K562 (cell line): ENCODE measurements at regions of chr16 and their contacts with region 1.

Region 1: DNA sequence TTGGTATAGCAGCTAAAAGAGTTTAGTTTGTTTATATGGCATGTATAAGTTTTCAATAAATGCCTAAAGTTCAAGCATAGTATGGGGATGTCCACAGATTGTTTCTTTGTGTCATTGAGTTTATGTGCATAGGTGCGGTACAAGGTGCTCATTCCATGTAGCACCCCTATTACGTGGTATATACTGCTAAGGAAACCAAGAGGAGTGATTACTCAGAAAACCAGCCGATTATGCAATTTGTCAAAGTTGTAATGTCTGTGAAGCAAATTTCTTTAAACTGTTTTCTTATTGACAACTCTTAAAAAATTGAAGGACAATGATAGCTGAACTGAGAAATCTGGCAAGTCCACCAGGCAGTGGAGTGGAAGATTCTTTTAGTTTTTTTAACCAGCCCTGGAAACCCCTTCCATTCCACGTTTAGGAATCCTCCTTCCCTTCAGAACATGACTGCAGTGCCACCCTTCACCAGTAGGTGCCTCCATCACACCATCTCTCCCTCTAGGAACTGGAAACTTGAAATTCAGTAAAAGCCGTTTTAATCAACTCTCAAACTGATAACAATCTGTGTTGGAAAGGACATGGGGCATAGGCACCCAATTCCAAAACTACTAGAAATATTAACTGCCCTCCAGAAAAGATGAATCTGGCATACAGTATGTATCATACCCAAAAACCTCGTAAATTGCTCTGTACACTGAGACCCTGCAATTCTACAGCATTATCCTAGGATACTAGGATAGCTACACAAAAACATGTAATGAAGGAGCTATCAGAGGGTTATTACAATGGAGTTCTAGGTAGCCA is 43.5 kb downstream of the REXO5 start:
- DNase-seq: peak; percentile 46 to 74 (median 48)
- ATAC-seq: peak; percentile 79
- H3K4me3 ChIP-seq: no peak overlapping the region
- H3K27ac ChIP-seq: no peak overlapping the region
- H3K4me1 ChIP-seq: no peaks in the 10 kb centered on the region; a peak in 1 of 5 replicates
- H3K27me3 ChIP-seq: no peaks in the 10 kb centered on the region
- CTCF ChIP-seq: peak; percentile 87 to 95 (median 92)
- EP300 ChIP-seq: no peak
- POLR2A ChIP-seq: no peak
- RAD21 ChIP-seq: peak; percentile 98

Region 2: GRCh38 chr16:20660325-20660724 is 189.5 kb before region 1 on chr16:
- CTCF ChIA-PET with region 1: no interaction called
- POLR2A ChIA-PET with region 1: no interaction called
- in situ Hi-C with region 1: no loop called
- intact Hi-C with region 1: no loop called
- DNase-seq: no peak
- ATAC-seq: no peak
- H3K4me3 ChIP-seq: no peak overlapping the region
- H3K27ac ChIP-seq: no peak overlapping the region
- H3K4me1 ChIP-seq: no peaks in the 10 kb centered on the region
- H3K27me3 ChIP-seq: no peaks in the 10 kb centered on the region
- CTCF ChIP-seq: no peak
- EP300 ChIP-seq: no peak
- POLR2A ChIP-seq: no peak
- RAD21 ChIP-seq: no peak

Region 3: DNA sequence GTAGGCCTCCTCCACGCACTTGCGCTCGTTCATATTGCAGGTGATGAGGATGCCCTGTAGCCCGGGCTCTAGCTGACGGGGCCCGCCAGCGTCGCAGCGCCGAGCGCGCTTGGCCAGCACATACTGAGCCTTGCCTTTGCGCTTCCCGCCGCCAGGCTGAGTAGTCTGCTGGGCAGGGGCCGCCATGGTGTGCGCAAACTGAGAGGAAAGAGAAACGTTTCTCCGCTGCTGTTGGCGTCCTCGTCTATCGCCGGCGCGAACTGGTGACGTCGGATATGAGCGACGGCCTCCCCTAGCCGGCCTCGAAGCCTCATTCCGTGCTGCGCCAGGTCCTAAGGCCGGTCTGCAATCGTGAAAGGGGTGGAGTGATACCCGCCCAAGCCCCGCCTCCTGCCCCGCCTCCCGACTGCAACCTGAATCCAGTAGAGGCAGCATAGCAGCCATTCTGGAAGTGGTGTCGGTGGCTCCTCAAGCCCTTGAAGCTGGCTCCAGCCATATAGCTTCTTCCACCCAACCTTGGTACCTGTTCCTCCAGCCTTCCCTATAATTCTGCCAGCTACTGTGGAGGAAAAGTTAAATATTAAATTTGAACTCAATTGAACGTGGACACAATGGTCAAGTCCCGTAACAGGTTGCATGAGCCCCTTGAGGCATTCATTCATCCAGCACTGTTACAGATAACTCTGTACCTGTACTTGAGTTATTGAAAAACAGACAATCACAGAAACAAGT is 108.1 kb before region 1 on chr16 and contains the start of gene THUMPD1:
- CTCF ChIA-PET with region 1: no interaction called
- POLR2A ChIA-PET with region 1: no interaction called
- in situ Hi-C with region 1: no loop called
- intact Hi-C with region 1: no loop called
- DNase-seq: peak; percentile 93 to 97 (median 95)
- ATAC-seq: peak; percentile 93
- H3K4me3 ChIP-seq: peak within 1 kb of the TSS; percentile 96
- H3K27ac ChIP-seq: peak within 1 kb of the TSS; percentile 93
- H3K4me1 ChIP-seq: peaks cover 38 to 55% of the 10 kb centered on the region in 2 experiments
- H3K27me3 ChIP-seq: no peaks in the 10 kb centered on the region
- CTCF ChIP-seq: peak; percentile 30 to 43 (median 40); a peak in 3 of 6 replicates
- EP300 ChIP-seq: peak; percentile 35; the same call in 1 of the 2 replicates
- POLR2A ChIP-seq: peak; percentile 90
- RAD21 ChIP-seq: peak in 1 of 2 experiments; percentile 18; a peak in 2 of 4 replicates
- polyA plus RNA-seq, gene THUMPD1: 37.8 to 41.0 TPM

Region 4: DNA sequence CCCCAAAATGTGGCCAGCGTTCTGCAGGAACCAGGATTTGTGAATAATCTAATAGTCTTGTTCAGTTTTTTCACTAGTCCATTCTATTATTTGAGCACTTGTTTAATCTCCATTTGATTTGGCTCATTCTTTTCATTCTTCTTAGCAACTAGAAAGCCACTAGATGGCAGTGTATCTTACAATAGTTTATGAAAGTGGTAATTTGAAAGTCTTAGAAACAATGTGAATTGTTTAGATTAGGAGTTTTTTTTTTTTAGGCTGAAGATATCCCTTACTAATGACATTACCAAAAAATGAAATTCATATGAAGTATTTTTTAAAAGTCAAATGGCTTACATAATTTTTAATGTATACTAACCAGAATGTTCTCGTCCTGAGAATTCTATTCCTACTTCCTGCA is 50.2 kb before region 1 on chr16:
- CTCF ChIA-PET with region 1: no interaction called
- POLR2A ChIA-PET with region 1: no interaction called
- in situ Hi-C with region 1: no loop called
- intact Hi-C with region 1: loop called (anchors 5 kb)
- DNase-seq: peak in 2 of 4 experiments; percentile 22 to 29
- ATAC-seq: 0 out of 3 replicates have a peak, but pooled peaks have one; percentile 37
- H3K4me3 ChIP-seq: no peak overlapping the region
- H3K27ac ChIP-seq: peak overlapping the region; percentile 34; the same call in 1 of the 3 replicates
- H3K4me1 ChIP-seq: peaks cover 6 to 11% of the 10 kb centered on the region in 2 experiments; a peak in 3 of 5 replicates
- H3K27me3 ChIP-seq: no peaks in the 10 kb centered on the region
- CTCF ChIP-seq: peak in 2 of 3 experiments; percentile 35 to 65; a peak in 3 of 6 replicates
- EP300 ChIP-seq: no peak
- POLR2A ChIP-seq: no peak
- RAD21 ChIP-seq: peak; percentile 37 to 64

Region 5: DNA sequence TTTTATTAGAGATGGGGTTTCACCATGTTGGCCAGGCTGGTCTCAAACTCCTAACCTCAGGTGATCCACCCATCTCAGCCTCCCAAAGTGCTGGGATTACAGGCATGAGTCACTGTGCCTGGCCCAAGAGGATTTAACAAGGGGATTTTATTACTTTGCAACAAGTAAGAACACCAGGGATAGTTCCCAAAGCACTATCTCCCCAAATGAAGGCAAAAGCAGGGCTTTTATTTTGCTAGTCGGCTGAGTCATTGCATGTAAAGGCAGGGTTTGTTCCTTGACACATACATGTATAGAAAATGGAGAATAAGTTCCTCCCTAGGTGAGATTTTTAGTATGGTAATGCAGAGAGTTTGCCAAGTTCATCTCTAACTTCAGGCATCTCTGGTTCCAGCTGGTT is 19.4 kb before region 1 on chr16:
- CTCF ChIA-PET with region 1: no interaction called
- POLR2A ChIA-PET with region 1: no interaction called
- in situ Hi-C with region 1: no loop called
- intact Hi-C with region 1: no loop called
- DNase-seq: no peak
- ATAC-seq: no peak
- H3K4me3 ChIP-seq: no peak overlapping the region
- H3K27ac ChIP-seq: no peak overlapping the region
- H3K4me1 ChIP-seq: peaks cover 0 to 21% of the 10 kb centered on the region in 2 experiments; a peak in 3 of 5 replicates
- H3K27me3 ChIP-seq: no peaks in the 10 kb centered on the region
- CTCF ChIP-seq: no peak
- EP300 ChIP-seq: no peak
- POLR2A ChIP-seq: no peak
- RAD21 ChIP-seq: no peak

Region 6: DNA sequence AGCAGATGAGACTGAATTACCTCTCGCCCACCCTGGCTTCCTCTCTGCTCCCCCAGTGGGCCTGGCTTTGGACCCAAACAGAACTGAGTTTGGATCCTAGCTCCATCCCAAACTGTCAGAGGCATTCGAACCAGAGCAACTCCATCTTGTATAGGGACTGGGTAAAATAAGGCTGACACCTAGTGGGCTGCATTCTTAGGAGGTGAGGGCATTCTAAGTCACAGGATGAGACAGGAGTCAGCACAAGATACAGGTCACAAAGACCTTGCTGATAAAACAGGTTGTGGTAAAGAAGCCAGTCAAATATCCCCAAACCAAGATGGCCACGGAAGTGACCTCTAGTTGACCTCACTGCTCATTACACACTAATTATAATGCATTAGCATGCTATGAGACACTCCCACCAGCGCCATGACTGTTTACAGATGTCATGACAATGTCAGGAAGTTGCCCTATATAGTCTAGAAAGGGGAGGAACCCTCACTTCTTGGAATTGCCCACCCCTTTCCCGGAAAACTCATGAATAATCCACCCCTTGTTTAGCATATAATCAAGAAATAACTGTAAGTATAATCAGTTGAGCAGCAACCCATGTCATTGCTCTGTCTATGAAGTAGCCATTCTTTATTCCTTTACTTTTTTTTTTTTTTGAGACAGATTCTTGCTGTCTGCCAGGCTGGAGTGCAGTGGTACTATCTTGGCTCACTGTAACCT is 95.2 kb after region 1 on chr16:
- CTCF ChIA-PET with region 1: interaction called, 3 read pairs
- POLR2A ChIA-PET with region 1: no interaction called
- in situ Hi-C with region 1: no loop called
- intact Hi-C with region 1: loop called (anchors 1 kb)
- DNase-seq: peak; percentile 35 to 83 (median 42)
- ATAC-seq: peak; percentile 91
- H3K4me3 ChIP-seq: no peak overlapping the region
- H3K27ac ChIP-seq: peak overlapping the region; percentile 81
- H3K4me1 ChIP-seq: peaks cover 12 to 24% of the 10 kb centered on the region in 2 experiments
- H3K27me3 ChIP-seq: 0 out of 5 replicates have a peak, but pooled peaks cover 0 to 2% of the 10 kb centered on the region in 2 experiments
- CTCF ChIP-seq: peak in 1 of 3 experiments; percentile 28; a peak in 1 of 6 replicates
- EP300 ChIP-seq: no peak; the same call in none of the 2 replicates
- POLR2A ChIP-seq: no peak
- RAD21 ChIP-seq: peak; percentile 78 to 80

Region 7: DNA sequence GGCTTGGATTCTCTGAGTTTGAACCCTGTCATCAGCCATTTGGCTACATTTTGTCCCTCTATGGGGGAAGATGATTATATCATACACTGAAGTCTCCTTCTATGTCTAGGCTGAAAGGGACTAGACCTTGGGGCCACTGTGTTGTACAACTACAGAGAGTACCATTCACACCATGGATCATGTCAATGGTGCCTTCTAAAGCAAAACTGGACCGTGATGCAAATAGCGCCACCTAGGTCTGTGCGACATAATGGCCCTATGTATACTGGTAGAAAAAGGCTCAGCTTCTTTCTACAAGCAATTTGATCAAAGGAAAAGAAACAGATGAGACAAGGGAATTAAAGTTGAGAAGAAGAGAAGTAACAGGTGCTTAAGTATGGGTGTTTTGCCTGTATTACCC is 151.5 kb after region 1 on chr16:
- CTCF ChIA-PET with region 1: interaction called, 11 read pairs
- POLR2A ChIA-PET with region 1: interaction called, 4 read pairs
- in situ Hi-C with region 1: no loop called
- intact Hi-C with region 1: loop called (anchors 2 kb)
- DNase-seq: peak; percentile 31 to 62 (median 40)
- ATAC-seq: peak; percentile 87
- H3K4me3 ChIP-seq: no peak overlapping the region
- H3K27ac ChIP-seq: no peak overlapping the region
- H3K4me1 ChIP-seq: no peaks in the 10 kb centered on the region
- H3K27me3 ChIP-seq: peaks cover 10 to 26% of the 10 kb centered on the region in 2 experiments
- CTCF ChIP-seq: peak; percentile 63 to 77 (median 75)
- EP300 ChIP-seq: no peak
- POLR2A ChIP-seq: no peak
- RAD21 ChIP-seq: peak; percentile 31 to 79; a peak in 3 of 4 replicates

Region 8: DNA sequence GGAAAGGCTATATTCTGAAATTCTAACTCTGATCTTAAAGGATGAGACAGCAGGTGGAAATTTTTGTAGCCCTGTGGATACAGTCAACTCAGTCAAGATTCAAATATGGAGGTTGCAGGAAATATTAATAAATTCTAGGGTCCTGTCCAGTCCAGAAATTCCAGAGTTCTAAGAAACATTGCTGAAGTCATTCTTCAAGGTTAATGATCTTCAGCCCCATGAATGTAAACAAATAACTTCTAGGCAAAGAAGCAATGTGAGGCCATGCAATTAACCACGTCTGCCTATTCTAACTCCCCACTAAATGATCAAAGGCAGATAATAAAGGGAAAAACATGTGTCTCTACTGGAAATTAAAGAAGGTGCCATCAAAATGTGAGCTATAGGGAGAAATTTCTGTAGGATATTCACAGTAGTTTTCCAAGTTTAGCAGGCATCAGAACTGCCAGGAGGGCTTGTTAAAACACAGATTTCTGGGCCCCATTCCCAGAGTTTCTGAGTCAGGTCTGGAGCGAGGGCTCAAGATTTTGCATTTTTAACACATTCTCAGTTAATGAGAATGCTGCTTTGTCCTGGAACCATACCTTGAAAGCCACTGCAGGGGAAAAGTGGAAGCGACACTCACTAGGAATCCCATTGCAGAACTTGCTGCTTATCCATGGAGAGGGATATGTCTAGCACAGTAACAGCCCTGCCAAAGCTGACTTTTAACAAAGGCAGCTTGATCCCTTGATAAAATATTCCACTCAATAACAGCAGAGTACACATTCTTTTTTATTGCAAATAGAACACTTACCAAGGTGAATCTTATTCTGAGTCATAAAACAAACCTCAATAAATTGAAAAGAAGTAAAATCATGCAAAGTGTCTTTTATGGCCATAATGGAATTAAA is 239.1 kb after region 1 on chr16:
- CTCF ChIA-PET with region 1: interaction called, 41 read pairs
- POLR2A ChIA-PET with region 1: no interaction called
- in situ Hi-C with region 1: loop called (anchors 5 kb)
- intact Hi-C with region 1: no loop called
- DNase-seq: no peak
- ATAC-seq: no peak
- H3K4me3 ChIP-seq: no peak overlapping the region
- H3K27ac ChIP-seq: no peak overlapping the region
- H3K4me1 ChIP-seq: no peaks in the 10 kb centered on the region
- H3K27me3 ChIP-seq: peaks cover 3 to 7% of the 10 kb centered on the region in 2 experiments; a peak in 3 of 5 replicates
- CTCF ChIP-seq: no peak
- EP300 ChIP-seq: no peak
- POLR2A ChIP-seq: no peak
- RAD21 ChIP-seq: no peak

Region 9: GRCh38 chr16:21300309-21301167 is 450.7 kb after region 1 on chr16:
- CTCF ChIA-PET with region 1: interaction called, 5 read pairs
- POLR2A ChIA-PET with region 1: no interaction called
- in situ Hi-C with region 1: no loop called
- intact Hi-C with region 1: loop called (anchors 10 kb)
- DNase-seq: peak; percentile 91 to 98 (median 92)
- ATAC-seq: peak; percentile 92
- H3K4me3 ChIP-seq: peak overlapping the region; percentile 60
- H3K27ac ChIP-seq: peak overlapping the region; percentile 43; the same call in 2 of the 3 replicates
- H3K4me1 ChIP-seq: peaks cover 13% of the 10 kb centered on the region in 2 experiments; a peak in 4 of 5 replicates
- H3K27me3 ChIP-seq: no peaks in the 10 kb centered on the region
- CTCF ChIP-seq: peak; percentile 89 to 99 (median 95)
- EP300 ChIP-seq: peak; percentile 63
- POLR2A ChIP-seq: peak; percentile 65; the same call in 1 of the 2 replicates
- RAD21 ChIP-seq: peak; percentile 97